Mammary epithelial cell (primary cell): ENCODE measurements at regions of chr20 and their contacts with region 1.

Region 1: GRCh38 chr20:23937303-23938117 is 51.1 kb downstream of the GGTLC1 start:
- DNase-seq: peak; percentile 42
- H3K4me3 ChIP-seq: no peak overlapping the region
- H3K27ac ChIP-seq: no peak overlapping the region
- H3K4me1 ChIP-seq: no peaks in the 10 kb centered on the region
- H3K27me3 ChIP-seq: no peaks in the 10 kb centered on the region
- CTCF ChIP-seq: peak; percentile 62 to 74

Region 2: DNA sequence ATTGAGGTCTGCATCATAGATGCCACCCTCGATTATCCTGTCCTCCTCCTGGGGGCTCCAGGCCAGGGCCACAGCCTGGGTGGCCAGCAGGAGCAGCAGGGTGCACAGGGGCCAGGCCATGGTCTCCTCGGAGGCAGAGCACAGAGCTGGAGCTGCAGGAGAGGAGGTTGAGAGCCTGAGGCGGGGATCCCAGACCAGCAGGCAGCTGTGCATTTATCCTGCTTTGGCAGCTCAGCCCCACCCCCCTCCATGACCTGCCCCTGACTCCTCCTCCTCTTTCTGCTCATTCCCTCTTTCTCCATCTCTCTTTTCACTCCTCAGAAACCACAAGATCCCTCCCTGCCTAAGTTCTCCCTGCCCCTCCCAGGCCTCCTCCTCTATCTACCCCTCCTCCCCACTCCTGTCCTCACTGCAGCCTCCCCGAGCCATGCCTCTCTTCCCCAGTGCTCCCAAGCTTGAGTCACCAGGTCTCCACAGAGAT is 110.9 kb before region 1 on chr20 and contains the start of gene CST2:
- CTCF ChIA-PET with region 1: no interaction called
- dilution Hi-C with region 1: no loop called
- in situ Hi-C with region 1: no loop called
- intact Hi-C with region 1: no loop called
- DNase-seq: no peak
- H3K4me3 ChIP-seq: no peak within 1 kb of the TSS
- H3K27ac ChIP-seq: no peak within 1 kb of the TSS
- H3K4me1 ChIP-seq: no peaks in the 10 kb centered on the region
- H3K27me3 ChIP-seq: no peaks in the 10 kb centered on the region
- CTCF ChIP-seq: no peak
- total RNA-seq, gene CST2: not detected

Region 3: GRCh38 chr20:23889775-23890211 is 47.7 kb before region 1 on chr20:
- CTCF ChIA-PET with region 1: no interaction called
- dilution Hi-C with region 1: no loop called
- in situ Hi-C with region 1: no loop called
- intact Hi-C with region 1: loop called (anchors 5 kb)
- DNase-seq: peak; percentile 71
- H3K4me3 ChIP-seq: no peak overlapping the region
- H3K27ac ChIP-seq: no peak overlapping the region
- H3K4me1 ChIP-seq: no peaks in the 10 kb centered on the region
- H3K27me3 ChIP-seq: peaks cover 2% of the 10 kb centered on the region
- CTCF ChIP-seq: peak; percentile 44 to 79

Region 4: DNA sequence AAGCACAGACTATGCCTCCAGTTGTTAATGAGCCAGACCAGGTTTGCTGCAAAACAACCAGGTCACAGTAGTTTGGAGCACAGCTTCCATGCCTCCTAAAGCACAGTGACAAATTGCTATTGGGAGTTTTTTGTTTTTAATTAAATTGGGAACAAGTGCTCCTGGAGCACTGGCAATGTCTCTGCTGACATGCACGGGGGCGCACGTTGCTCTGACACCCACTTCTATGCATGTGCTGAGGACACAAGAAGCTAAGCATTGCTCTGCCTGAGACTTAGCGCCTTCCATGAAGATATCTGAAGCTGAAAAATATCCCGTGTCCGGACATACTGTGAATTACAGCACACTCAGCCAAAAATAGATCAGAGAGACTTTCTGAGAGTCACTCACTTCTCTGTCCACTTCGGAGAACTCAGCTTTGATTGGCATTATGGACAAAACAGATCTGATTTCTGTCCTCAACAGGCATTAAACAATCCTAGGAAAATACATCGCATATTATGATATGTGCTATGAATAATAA is 69.6 kb after region 1 on chr20:
- CTCF ChIA-PET with region 1: no interaction called
- dilution Hi-C with region 1: no loop called
- in situ Hi-C with region 1: no loop called
- intact Hi-C with region 1: no loop called
- DNase-seq: no peak
- H3K4me3 ChIP-seq: no peak overlapping the region
- H3K27ac ChIP-seq: no peak overlapping the region
- H3K4me1 ChIP-seq: no peaks in the 10 kb centered on the region
- H3K27me3 ChIP-seq: no peaks in the 10 kb centered on the region
- CTCF ChIP-seq: no peak

Region 5: GRCh38 chr20:24100385-24101011 is 163.0 kb after region 1 on chr20:
- CTCF ChIA-PET with region 1: no interaction called
- dilution Hi-C with region 1: no loop called
- in situ Hi-C with region 1: no loop called
- intact Hi-C with region 1: loop called (anchors 1 kb)
- DNase-seq: peak; percentile 66
- H3K4me3 ChIP-seq: no peak overlapping the region
- H3K27ac ChIP-seq: no peak overlapping the region
- H3K4me1 ChIP-seq: peaks cover 13% of the 10 kb centered on the region
- H3K27me3 ChIP-seq: no peaks in the 10 kb centered on the region
- CTCF ChIP-seq: peak; percentile 51 to 61

Region 6: DNA sequence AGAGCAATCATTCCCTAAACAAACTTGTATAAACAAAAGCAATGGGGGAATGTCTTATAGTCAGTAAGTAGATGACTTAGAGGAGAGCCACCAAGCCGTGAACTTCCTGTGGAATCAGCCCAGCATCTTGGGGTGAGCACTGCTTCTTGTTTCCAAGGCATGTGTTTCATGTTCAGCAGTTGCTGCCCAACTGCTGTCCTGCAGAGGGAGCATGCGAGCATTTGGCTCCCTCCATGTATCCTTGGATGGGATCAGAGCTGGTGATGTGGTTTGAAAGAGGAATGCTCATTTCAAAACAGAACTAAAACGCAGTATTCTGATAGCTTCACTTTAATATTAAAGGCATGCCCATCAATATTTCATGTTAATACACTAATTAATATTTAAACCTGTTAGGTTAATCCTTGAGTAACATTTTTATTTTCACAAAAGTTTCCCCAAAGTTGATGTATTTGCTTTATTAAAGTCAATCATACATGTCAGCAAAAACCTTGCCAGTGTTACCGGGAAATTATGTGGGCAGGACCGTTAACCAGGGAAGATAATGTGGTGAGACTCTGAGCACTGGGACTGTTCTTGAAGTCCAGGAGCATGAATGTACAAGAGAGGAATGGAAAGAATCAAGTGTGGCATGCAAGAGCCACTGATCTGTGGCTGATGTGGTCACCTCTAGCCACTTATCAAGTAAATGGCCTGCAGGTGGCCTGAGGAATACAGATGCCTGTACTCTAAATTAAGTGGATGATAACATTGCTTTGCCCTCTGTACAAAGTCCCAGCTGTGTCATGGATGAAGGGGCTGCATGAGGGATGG is 223.3 kb after region 1 on chr20:
- CTCF ChIA-PET with region 1: no interaction called
- dilution Hi-C with region 1: no loop called
- in situ Hi-C with region 1: no loop called
- intact Hi-C with region 1: loop called (anchors 1 kb)
- DNase-seq: peak; percentile 43
- H3K4me3 ChIP-seq: no peak overlapping the region
- H3K27ac ChIP-seq: no peak overlapping the region
- H3K4me1 ChIP-seq: no peaks in the 10 kb centered on the region
- H3K27me3 ChIP-seq: no peaks in the 10 kb centered on the region
- CTCF ChIP-seq: peak; percentile 60 to 79

Region 7: GRCh38 chr20:24296477-24297261 is 359.2 kb after region 1 on chr20:
- CTCF ChIA-PET with region 1: no interaction called
- dilution Hi-C with region 1: no loop called
- in situ Hi-C with region 1: no loop called
- intact Hi-C with region 1: loop called (anchors 5 kb)
- DNase-seq: peak; percentile 57
- H3K4me3 ChIP-seq: no peak overlapping the region
- H3K27ac ChIP-seq: no peak overlapping the region
- H3K4me1 ChIP-seq: no peaks in the 10 kb centered on the region
- H3K27me3 ChIP-seq: no peaks in the 10 kb centered on the region
- CTCF ChIP-seq: no peak

Region 8: GRCh38 chr20:24917797-24918578 is 980.5 kb after region 1 on chr20:
- CTCF ChIA-PET with region 1: interaction called, 4 read pairs
- dilution Hi-C with region 1: no loop called
- in situ Hi-C with region 1: loop called (anchors 10 to 25 kb)
- intact Hi-C with region 1: loop called (anchors 1 kb)
- DNase-seq: peak; percentile 33
- H3K4me3 ChIP-seq: no peak overlapping the region
- H3K27ac ChIP-seq: no peak overlapping the region
- H3K4me1 ChIP-seq: no peaks in the 10 kb centered on the region
- H3K27me3 ChIP-seq: no peaks in the 10 kb centered on the region
- CTCF ChIP-seq: peak; percentile 75 to 88